ENCODE measurements at regions of chr14 and their contacts with region 1.

Region 1: DNA sequence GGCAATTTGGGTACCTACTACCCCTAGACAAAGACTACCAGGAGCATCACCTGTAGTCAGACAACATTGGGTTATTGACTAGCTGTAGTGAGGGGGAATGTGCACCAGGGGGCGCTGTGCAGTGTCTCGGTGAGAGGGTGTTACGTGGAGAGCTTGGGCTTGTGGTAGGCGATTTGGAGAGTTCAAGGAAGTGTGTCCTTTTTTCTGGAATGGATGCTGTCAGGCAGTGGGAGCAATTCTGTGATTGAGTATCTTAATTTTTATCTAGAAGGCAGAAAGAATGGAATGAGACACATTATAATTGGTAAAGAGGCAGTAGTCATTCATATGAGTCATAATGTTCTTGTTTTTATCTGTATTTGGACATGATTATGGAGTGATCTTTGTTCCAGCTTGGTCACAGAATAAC is 187.7 kb downstream of the GALC start:
- DNase-seq: peak; percentile 67
- H3K4me3 Mint-ChIP-seq: no peak overlapping the region
- H3K27ac Mint-ChIP-seq: peak overlapping the region; percentile 7
- H3K4me1 Mint-ChIP-seq: peaks cover 6% of the 10 kb centered on the region
- H3K27me3 Mint-ChIP-seq: no peaks in the 10 kb centered on the region
- CTCF ChIP-seq: peak; percentile 72

Region 2: GRCh38 chr14:87745507-87746118 is 59.7 kb before region 1 on chr14:
- CTCF ChIA-PET with region 1: interaction called, 18 read pairs
- POLR2A ChIA-PET with region 1: interaction called, 4 read pairs
- intact Hi-C with region 1: no loop called
- DNase-seq: peak; percentile 66
- H3K4me3 Mint-ChIP-seq: no peak overlapping the region
- H3K27ac Mint-ChIP-seq: no peak overlapping the region
- H3K4me1 Mint-ChIP-seq: no peaks in the 10 kb centered on the region
- H3K27me3 Mint-ChIP-seq: no peaks in the 10 kb centered on the region
- CTCF ChIP-seq: peak; percentile 61

Region 3: GRCh38 chr14:87824266-87824665 is 18.9 kb after region 1 on chr14:
- CTCF ChIA-PET with region 1: interaction called, 10 read pairs
- POLR2A ChIA-PET with region 1: no interaction called
- intact Hi-C with region 1: no loop called
- DNase-seq: no peak
- H3K4me3 Mint-ChIP-seq: no peak overlapping the region
- H3K27ac Mint-ChIP-seq: no peak overlapping the region
- H3K4me1 Mint-ChIP-seq: no peaks in the 10 kb centered on the region
- H3K27me3 Mint-ChIP-seq: no peaks in the 10 kb centered on the region
- CTCF ChIP-seq: no peak

Region 4: GRCh38 chr14:87869619-87870583 is 64.6 kb after region 1 on chr14:
- CTCF ChIA-PET with region 1: interaction called, 20 read pairs
- POLR2A ChIA-PET with region 1: no interaction called
- intact Hi-C with region 1: loop called (anchors 5 kb)
- DNase-seq: peak; percentile 87
- H3K4me3 Mint-ChIP-seq: no peak overlapping the region
- H3K27ac Mint-ChIP-seq: no peak overlapping the region
- H3K4me1 Mint-ChIP-seq: peaks cover 24% of the 10 kb centered on the region
- H3K27me3 Mint-ChIP-seq: no peaks in the 10 kb centered on the region
- CTCF ChIP-seq: no peak

Region 5: DNA sequence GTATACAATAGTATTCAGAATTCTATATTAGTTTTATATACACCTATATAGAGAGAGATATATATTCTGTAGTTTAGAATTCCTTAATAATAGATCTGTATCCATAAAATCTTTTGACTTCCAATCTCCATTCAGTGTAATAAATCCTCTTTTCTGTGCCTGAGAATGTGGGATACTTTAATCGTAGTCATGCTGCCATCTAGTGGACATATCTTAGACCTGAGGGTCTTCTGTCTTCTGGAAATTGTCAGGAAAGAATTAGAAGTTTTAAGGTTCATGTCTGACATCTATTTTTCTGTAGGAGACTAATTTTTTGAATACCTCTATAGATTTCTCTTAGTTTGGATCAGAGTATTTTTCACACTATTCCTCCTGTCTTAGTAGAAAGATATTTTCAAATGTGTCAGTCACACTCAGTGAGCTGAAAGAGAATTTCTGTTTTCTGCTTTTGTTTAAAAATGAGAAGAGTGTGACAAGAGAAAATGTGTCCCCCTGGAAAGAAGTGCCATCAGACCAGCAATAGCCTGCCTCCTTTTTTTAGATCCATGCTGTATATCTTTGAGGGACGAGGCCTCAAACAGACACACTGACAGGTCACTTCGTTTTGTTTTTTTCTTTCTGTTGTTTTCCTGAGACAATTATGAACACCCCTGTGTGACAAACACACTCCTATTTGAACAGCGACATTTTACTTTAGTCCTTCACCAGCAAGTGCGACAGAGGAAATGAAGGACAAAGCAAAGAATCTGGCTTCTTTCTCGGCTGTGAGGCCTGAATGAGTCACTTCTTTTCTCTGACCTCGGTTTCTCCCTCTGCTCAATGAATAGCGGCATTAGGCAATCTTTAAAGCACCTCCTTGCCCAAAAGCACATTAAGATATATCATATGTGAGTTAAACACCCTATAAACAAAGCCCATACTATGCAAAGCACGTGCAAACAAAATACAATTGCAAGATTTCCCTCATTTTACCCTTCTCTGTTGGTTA is 91.4 kb after region 1 on chr14:
- CTCF ChIA-PET with region 1: interaction called, 109 read pairs
- POLR2A ChIA-PET with region 1: no interaction called
- intact Hi-C with region 1: loop called (anchors 1 kb)
- DNase-seq: peak; percentile 73
- H3K4me3 Mint-ChIP-seq: no peak overlapping the region
- H3K27ac Mint-ChIP-seq: peak overlapping the region; percentile 32
- H3K4me1 Mint-ChIP-seq: peaks cover 8% of the 10 kb centered on the region
- H3K27me3 Mint-ChIP-seq: no peaks in the 10 kb centered on the region
- CTCF ChIP-seq: peak; percentile 62

Region 6: DNA sequence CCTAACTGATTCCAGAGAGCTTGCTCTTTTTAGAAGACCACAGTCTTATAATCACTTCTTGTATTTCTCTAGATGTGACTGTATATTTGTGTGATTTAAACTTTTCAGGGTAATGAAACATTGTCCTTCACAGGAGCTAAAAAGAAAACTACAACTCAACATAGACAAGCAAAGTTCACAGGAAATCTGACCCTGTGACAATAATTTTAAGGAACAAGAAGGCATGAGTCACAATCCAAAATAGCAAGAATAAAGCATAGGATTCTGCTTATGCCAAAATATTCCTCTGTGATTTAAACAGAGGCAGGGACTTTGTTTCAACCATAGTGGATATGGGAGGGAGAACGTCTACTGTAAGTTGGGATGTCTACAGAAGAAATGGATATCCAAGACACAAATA is 243.9 kb after region 1 on chr14:
- CTCF ChIA-PET with region 1: no interaction called
- POLR2A ChIA-PET with region 1: no interaction called
- intact Hi-C with region 1: no loop called
- DNase-seq: no peak
- H3K4me3 Mint-ChIP-seq: no peak overlapping the region
- H3K27ac Mint-ChIP-seq: no peak overlapping the region
- H3K4me1 Mint-ChIP-seq: no peaks in the 10 kb centered on the region
- H3K27me3 Mint-ChIP-seq: peaks cover 9% of the 10 kb centered on the region
- CTCF ChIP-seq: no peak